ENCODE measurements at regions of chr2 and their contacts with region 1.

Region 1: GRCh38 chr2:112187805-112188596 is 49.8 kb downstream of the FBLN7 start:
- DNase-seq: peak; percentile 59 to 93 (median 72)
- ATAC-seq: peak; percentile 82
- H3K4me3 ChIP-seq: peak overlapping the region; percentile 28
- H3K4me3 Mint-ChIP-seq: peak overlapping the region; percentile 56
- H3K27ac ChIP-seq: peak overlapping the region; percentile 90 to 96
- H3K27ac Mint-ChIP-seq: peak overlapping the region; percentile 94
- H3K4me1 ChIP-seq: peaks cover 79% of the 10 kb centered on the region
- H3K4me1 Mint-ChIP-seq: peaks cover 84% of the 10 kb centered on the region
- H3K27me3 ChIP-seq: no peaks in the 10 kb centered on the region
- H3K27me3 Mint-ChIP-seq: no peaks in the 10 kb centered on the region
- CTCF ChIP-seq: no peak

Region 2: DNA sequence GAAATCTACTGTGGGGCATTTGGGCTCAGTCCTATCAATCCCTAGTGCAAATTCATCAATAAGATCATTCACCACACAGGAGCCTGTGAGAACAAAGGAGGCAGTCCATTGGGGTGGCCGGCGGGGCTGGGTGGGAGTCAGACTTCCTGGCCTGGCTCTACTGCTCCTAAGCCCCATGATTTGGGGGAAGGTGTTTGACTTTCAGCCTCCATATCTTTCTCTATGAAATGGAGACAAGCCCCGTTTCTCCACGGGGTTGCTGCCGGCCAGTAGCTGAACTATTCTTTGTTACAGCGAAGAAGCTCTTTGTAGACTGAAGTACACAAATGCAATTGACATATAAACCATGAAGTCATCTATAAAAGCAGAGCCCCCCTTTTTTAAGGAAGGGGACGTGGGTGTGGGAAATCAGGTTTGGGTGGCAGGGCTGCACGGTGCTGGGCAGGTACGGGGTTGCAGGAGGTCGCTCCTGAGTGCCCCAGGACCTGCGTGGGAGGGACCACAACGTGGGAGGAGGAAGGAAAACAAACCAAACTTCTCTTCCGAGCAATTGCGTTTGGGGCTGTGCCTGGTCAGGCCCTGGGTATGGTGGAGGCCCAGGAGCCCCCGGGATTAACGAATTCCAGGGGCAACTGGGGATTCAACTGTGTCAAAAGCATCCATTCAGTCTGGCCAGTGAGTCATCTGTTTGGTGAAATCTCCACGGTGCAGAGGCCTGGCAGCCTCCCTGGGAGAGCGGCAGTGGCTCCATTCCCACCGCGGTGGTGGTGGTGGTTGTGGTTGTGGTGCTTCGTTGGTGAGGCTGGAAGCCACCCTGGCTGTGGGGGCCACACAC is 31.6 kb before region 1 on chr2:
- CTCF ChIA-PET with region 1: no interaction called
- POLR2A ChIA-PET with region 1: interaction called, 30 read pairs
- intact Hi-C with region 1: loop called in 1 of 2 experiments (anchors 1 kb)
- DNase-seq: peak in 9 of 14 experiments; percentile 11 to 65 (median 44)
- ATAC-seq: no peak
- H3K4me3 ChIP-seq: peak overlapping the region; percentile 47
- H3K4me3 Mint-ChIP-seq: peak overlapping the region; percentile 83
- H3K27ac ChIP-seq: peak overlapping the region; percentile 46 to 60
- H3K27ac Mint-ChIP-seq: peak overlapping the region; percentile 89
- H3K4me1 ChIP-seq: peaks cover 33% of the 10 kb centered on the region
- H3K4me1 Mint-ChIP-seq: peaks cover 31% of the 10 kb centered on the region
- H3K27me3 ChIP-seq: no peaks in the 10 kb centered on the region
- H3K27me3 Mint-ChIP-seq: no peaks in the 10 kb centered on the region
- CTCF ChIP-seq: no peak

Region 3: DNA sequence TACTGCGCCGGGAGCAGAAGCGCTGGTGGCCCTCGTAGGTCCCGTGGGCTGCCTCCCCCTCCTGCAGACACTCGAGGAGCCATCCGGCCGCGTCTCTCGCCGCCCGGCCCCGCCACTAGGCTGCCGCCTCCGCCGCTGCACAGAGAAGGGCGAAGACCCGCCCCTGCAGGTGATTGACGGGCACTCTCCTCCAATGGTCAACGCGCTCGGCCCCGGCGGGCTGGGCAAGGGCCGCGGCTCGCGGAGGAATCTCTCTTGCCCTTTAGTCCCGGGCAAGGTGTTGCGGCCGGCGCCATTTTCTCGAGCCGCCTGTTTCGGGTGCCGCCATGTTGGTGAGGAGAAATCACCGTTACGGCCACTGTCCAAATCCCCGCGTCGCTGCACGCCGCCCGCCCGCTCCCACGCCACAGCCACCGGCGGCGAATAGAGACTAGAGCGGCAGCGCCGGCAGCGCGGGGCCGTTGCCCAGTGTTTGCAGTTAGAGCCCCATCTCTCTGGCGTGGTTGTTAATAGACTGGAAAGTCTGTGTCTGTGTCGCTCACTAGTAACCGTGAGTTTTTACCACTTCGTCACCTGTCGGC is 87.4 kb after region 1 on chr2 and contains the start of gene ZC3H6:
- CTCF ChIA-PET with region 1: no interaction called
- POLR2A ChIA-PET with region 1: interaction called, 13 read pairs
- intact Hi-C with region 1: loop called in 1 of 2 experiments (anchors 5 kb)
- DNase-seq: peak; percentile 97 to 100 (median 100)
- ATAC-seq: peak; percentile 90
- H3K4me3 ChIP-seq: peak within 1 kb of the TSS; percentile 94
- H3K4me3 Mint-ChIP-seq: peak within 1 kb of the TSS; percentile 98
- H3K27ac ChIP-seq: peak within 1 kb of the TSS; percentile 100
- H3K27ac Mint-ChIP-seq: peak within 1 kb of the TSS; percentile 100
- H3K4me1 ChIP-seq: peaks cover 8% of the 10 kb centered on the region
- H3K4me1 Mint-ChIP-seq: peaks cover 33% of the 10 kb centered on the region
- H3K27me3 ChIP-seq: no peaks in the 10 kb centered on the region
- H3K27me3 Mint-ChIP-seq: no peaks in the 10 kb centered on the region
- CTCF ChIP-seq: no peak
- total RNA-seq, gene ZC3H6: 18.0 to 21.4 TPM